Activated naive CD4-positive, alpha-beta T cell treated with anti-CD3 and anti-CD28 coated beads, Interleukin-2, amount 10 ng/mL, durations not matched to agents 7 days and 5 days (primary cell): ENCODE measurements at regions of chr17 and their contacts with region 1.

Region 1: DNA sequence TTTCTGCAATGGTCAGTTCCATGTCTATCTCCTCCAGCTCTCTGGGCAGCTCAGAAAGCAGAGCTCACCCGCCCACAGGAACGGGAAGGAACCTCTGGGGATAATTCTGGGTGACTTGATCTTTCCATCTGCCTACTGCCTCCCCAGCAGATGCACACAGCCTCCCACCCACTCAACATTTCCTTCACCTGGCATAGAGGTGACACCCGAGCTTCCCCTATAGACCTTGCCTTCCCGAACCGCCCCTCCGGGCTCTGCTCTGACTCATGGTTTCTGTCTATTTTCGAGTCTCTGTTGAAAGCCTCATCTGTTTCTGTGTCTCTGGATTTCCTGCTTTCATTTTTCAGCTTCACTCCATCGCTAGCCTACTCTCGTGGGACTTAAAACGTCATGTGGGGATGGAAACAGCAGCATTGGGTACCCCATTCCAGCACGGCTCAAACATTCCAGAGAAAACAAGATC is 11.4 kb downstream of the GGA3 start:
- DNase-seq: peak; percentile 78
- H3K4me3 Mint-ChIP-seq: peak overlapping the region; percentile 64
- H3K27ac Mint-ChIP-seq: peak overlapping the region; percentile 90
- H3K4me1 Mint-ChIP-seq: peaks cover 40% of the 10 kb centered on the region
- H3K27me3 Mint-ChIP-seq: no peaks in the 10 kb centered on the region

Region 2: GRCh38 chr17:75261336-75262111 is 11.5 kb after region 1 on chr17 and contains the starts of genes GGA3 and MRPS7:
- CTCF ChIA-PET with region 1: interaction called, 13 read pairs
- DNase-seq: peak; percentile 97
- H3K4me3 Mint-ChIP-seq: peak within 1 kb of the TSS; percentile 97
- H3K27ac Mint-ChIP-seq: peak within 1 kb of the TSS; percentile 99
- H3K4me1 Mint-ChIP-seq: peaks cover 58% of the 10 kb centered on the region
- H3K27me3 Mint-ChIP-seq: no peaks in the 10 kb centered on the region